Dorsolateral prefrontal cortex (tissue), 120 donors: ENCODE measurements at regions of chr2 and their contacts with region 1.

Region 1: GRCh38 chr2:103295591-103295990 is 533.8 kb downstream of the TMEM182 start:
- DNase-seq: no peak
- H3K4me3 ChIP-seq: no peak overlapping the region
- H3K27ac ChIP-seq: no peak overlapping the region
- H3K27me3 ChIP-seq: peaks cover 0 to 10% (median 0%) of the 10 kb centered on the region in 45 donors
- CTCF ChIP-seq: no peak

Region 2: DNA sequence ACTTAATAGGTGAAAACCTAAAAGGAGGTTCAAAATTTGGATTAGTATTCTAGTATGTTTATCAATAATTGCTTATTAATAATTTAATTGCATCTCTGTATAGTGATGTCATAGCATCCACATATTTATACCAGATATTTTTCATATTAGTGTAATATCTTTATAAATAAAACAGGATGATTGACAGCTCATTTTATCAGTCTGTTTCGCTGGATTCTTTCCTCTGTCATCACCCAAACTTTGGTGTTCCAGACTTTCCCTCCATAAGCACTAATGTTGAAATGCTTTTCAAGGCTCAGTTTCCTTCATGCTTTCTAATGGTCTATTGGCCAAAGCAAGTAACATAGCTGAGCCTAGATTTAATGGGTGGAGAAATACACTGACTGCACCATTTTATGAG is 185.4 kb before region 1 on chr2:
- intact Hi-C with region 1: no loop called
- DNase-seq: no peak
- H3K4me3 ChIP-seq: no peak overlapping the region
- H3K27ac ChIP-seq: no peak overlapping the region
- H3K27me3 ChIP-seq: no peaks in the 10 kb centered on the region
- CTCF ChIP-seq: no peak

Region 3: GRCh38 chr2:104862058-104862941 is 1566.7 kb after region 1 on chr2:
- intact Hi-C with region 1: loop called in 1 of 2 experiments (anchors 5 kb)
- DNase-seq: peak in 6 of 10 donors; percentile 63 to 71 (median 68)
- H3K4me3 ChIP-seq: peak overlapping the region; percentile 47 to 87 (median 65)
- H3K27ac ChIP-seq: peak overlapping the region; percentile 77 to 99 (median 96)
- H3K27me3 ChIP-seq: peaks cover 0 to 27% (median 0%) of the 10 kb centered on the region in 45 donors
- CTCF ChIP-seq: peak in 3 of 56 donors; percentile 5 to 10 (median 5)